Activated naive CD4-positive, alpha-beta T cell treated with anti-CD3 and anti-CD28 coated beads for 36 hours (primary cell): ENCODE measurements at regions of chr18 and their contacts with region 1.

Region 1: GRCh38 chr18:54805571-54806334 is 22.5 kb upstream of the RAB27B start:
- DNase-seq: no peak
- H3K4me3 Mint-ChIP-seq: no peak overlapping the region
- H3K27ac Mint-ChIP-seq: no peak overlapping the region
- H3K4me1 Mint-ChIP-seq: peaks cover 8% of the 10 kb centered on the region
- H3K27me3 Mint-ChIP-seq: no peaks in the 10 kb centered on the region

Region 2: DNA sequence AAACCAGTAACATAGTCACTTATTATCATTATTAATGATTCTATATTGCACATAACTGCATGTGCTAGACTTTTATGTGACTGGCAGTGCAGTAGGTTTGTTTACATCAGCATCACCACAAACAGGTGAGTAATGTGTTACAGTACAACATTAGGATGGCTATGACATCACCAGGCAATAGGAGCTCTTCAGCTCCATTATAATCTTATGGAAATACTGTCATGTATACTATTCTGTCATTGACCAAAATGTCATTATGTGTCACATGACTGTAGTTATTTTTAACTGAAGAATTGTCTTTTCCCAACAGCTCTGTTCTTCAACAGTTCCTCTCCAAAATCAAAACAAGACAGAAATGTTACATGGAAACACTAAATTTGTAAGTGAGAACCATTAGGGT is 351.8 kb before region 1 on chr18:
- CTCF ChIA-PET with region 1: no interaction called
- intact Hi-C with region 1: no loop called
- DNase-seq: no peak
- H3K4me3 Mint-ChIP-seq: no peak overlapping the region
- H3K27ac Mint-ChIP-seq: no peak overlapping the region
- H3K4me1 Mint-ChIP-seq: no peaks in the 10 kb centered on the region
- H3K27me3 Mint-ChIP-seq: peaks cover 7% of the 10 kb centered on the region

Region 3: GRCh38 chr18:54712306-54712705 is 93.4 kb before region 1 on chr18:
- CTCF ChIA-PET with region 1: no interaction called
- intact Hi-C with region 1: loop called (anchors 1 kb)
- DNase-seq: peak; percentile 38
- H3K4me3 Mint-ChIP-seq: no peak overlapping the region
- H3K27ac Mint-ChIP-seq: no peak overlapping the region
- H3K4me1 Mint-ChIP-seq: peaks cover 26% of the 10 kb centered on the region
- H3K27me3 Mint-ChIP-seq: peaks cover 7% of the 10 kb centered on the region

Region 4: DNA sequence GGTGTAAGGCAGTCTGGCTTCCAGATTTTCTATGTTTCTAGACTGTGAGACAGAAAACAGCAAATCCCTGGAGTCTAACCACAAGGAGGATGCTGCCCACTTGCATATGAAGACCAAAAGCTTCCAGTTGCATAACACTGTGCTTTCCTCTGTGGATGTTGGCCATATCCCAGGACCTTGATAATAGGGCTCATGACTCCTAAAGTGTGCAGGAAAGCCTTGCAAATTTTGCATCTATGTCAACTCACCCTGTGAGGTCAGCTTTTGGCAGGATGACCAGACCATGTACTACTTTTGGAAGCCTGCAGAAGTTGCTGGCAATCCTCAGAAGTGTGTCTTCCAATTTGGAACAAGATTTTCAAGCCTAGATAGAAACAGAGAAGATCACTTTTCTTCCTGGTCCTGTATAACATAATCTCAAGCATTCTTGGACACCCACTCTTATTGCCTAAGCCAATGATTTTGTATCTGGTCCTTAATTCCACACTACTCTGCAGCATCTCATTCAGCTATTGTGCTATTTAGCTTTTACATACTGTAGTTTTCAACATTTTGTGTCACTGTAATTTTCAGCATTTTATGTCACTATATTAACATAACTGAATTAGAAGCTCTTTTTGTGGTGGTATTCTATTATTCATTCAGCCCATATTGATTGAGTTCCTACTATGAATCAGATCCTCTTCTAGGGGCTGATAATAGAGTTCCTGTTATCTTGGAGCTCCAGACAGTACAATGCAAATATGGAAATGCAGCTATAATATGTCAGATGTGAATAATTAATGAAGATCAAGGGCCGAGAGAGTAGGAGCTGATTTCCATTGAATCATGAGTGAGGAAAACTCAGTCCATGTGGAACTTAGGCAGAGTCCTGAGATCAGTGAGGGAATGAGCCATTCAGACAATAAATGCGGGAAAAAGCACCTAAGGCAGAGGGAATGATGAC is 62.8 kb before region 1 on chr18:
- CTCF ChIA-PET with region 1: no interaction called
- intact Hi-C with region 1: no loop called
- DNase-seq: no peak
- H3K4me3 Mint-ChIP-seq: no peak overlapping the region
- H3K27ac Mint-ChIP-seq: no peak overlapping the region
- H3K4me1 Mint-ChIP-seq: peaks cover 5% of the 10 kb centered on the region
- H3K27me3 Mint-ChIP-seq: peaks cover 2% of the 10 kb centered on the region